GM12878 (cell line): ENCODE measurements at regions of chr13 and their contacts with region 1.

Region 1: DNA sequence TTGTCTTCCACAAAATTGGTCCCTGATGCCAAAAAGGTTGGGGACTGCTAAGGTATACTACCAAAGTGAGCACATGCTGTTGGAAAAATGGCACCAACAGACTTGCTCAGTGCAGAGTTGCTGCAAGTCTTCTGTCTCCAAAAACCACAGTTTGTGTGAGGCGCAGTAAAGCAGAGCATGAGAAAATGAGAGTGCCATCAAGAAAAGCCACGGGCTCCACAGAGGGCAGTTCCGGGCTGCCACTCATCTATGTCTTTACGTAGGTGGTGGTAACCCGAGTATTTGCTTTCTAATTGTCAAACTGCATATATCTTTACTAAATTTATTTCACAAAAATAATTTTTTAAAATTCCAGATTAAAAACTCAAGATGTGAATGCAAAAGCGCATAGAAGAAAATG is 123.8 kb downstream of the RNF17 start:
- DNase-seq: peak; percentile 51
- ATAC-seq: peak; percentile 97
- H3K4me3 ChIP-seq: no peak overlapping the region
- H3K27ac ChIP-seq: peak overlapping the region; percentile 20; the same call in 1 of the 2 replicates
- H3K4me1 ChIP-seq: peaks cover 10% of the 10 kb centered on the region
- H3K27me3 ChIP-seq: no peaks in the 10 kb centered on the region
- CTCF ChIP-seq: no peak
- EP300 ChIP-seq: no peak
- POLR2A ChIP-seq: no peak
- RAD21 ChIP-seq: no peak

Region 2: DNA sequence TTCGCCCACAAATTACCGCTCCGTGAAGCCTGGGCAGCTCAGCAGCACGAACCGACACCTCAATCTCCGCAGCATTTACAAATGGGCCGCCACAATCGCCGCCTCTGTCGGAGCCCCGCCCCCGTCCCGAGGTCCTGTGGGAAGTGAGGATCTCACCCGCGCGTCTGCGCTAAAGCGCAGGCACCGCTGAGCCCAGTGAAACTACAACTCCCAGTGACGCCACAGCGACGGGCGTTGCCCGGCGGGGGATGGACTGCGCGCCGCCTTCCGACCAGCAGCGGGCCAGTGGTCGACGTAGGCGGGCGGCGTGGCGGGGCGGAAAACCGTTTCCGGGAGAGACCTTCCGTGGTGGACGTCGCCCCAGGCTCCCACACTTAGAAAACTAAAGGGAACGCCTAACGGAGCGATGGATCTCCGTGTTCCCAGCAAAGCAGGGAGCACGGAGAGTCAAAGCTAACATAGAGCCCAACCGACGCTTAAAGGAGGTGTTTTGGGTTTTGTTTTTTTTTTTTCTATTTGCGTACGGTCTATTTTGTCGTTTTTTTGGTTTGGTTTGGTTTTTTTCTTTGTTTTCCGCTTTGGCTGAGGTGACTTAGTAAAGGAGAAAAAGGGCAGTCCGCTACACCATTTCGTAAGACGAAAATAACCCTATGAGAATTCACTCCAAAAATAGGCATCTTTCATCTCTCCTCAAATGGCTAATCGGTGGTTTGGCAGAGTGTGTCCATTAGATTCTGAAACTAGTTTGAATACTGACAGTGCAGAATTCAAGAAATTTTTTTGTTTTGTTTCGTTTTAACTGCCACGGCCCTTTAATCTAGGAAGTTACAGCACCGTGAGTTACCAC is 35.2 kb after region 1 on chr13:
- CTCF ChIA-PET with region 1: no interaction called
- POLR2A ChIA-PET with region 1: no interaction called
- RAD21 ChIA-PET with region 1: no interaction called
- SMC1A ChIA-PET with region 1: interaction called, 4 read pairs
- in situ Hi-C with region 1: no loop called
- intact Hi-C with region 1: loop called (anchors 5 kb)
- DNase-seq: peak; percentile 93
- ATAC-seq: peak; percentile 95
- H3K4me3 ChIP-seq: peak overlapping the region; percentile 90
- H3K27ac ChIP-seq: peak overlapping the region; percentile 100
- H3K4me1 ChIP-seq: peaks cover 8% of the 10 kb centered on the region; the same call in 1 of the 2 replicates
- H3K27me3 ChIP-seq: no peaks in the 10 kb centered on the region
- CTCF ChIP-seq: no peak
- EP300 ChIP-seq: peak; percentile 36 to 48; a peak in 3 of 4 replicates
- POLR2A ChIP-seq: peak; percentile 90
- RAD21 ChIP-seq: no peak